K562 (cell line): ENCODE measurements at regions of chr9 and their contacts with region 1.

Region 1: GRCh38 chr9:32571969-32572899 is 725 bp downstream of the NDUFB6 start:
- DNase-seq: peak; percentile 59 to 82 (median 68)
- ATAC-seq: peak; percentile 97
- H3K4me3 ChIP-seq: peak overlapping the region; percentile 78
- H3K27ac ChIP-seq: peak overlapping the region; percentile 69
- H3K4me1 ChIP-seq: no peaks in the 10 kb centered on the region
- H3K27me3 ChIP-seq: no peaks in the 10 kb centered on the region
- CTCF ChIP-seq: peak; percentile 68 to 72 (median 72)
- EP300 ChIP-seq: no peak
- POLR2A ChIP-seq: no peak
- RAD21 ChIP-seq: peak; percentile 50 to 68

Region 2: GRCh38 chr9:32431940-32432555 is 140.2 kb before region 1 on chr9:
- CTCF ChIA-PET with region 1: no interaction called
- POLR2A ChIA-PET with region 1: no interaction called
- in situ Hi-C with region 1: no loop called
- intact Hi-C with region 1: loop called (anchors 5 kb)
- DNase-seq: peak; percentile 24 to 50 (median 44)
- ATAC-seq: peak; percentile 86
- H3K4me3 ChIP-seq: no peak overlapping the region
- H3K27ac ChIP-seq: no peak overlapping the region
- H3K4me1 ChIP-seq: peaks cover 0 to 5% of the 10 kb centered on the region in 2 experiments; a peak in 2 of 5 replicates
- H3K27me3 ChIP-seq: no peaks in the 10 kb centered on the region
- CTCF ChIP-seq: peak; percentile 50 to 61 (median 53)
- EP300 ChIP-seq: no peak
- POLR2A ChIP-seq: no peak
- RAD21 ChIP-seq: peak in 1 of 2 experiments; percentile 34; a peak in 2 of 4 replicates

Region 3: DNA sequence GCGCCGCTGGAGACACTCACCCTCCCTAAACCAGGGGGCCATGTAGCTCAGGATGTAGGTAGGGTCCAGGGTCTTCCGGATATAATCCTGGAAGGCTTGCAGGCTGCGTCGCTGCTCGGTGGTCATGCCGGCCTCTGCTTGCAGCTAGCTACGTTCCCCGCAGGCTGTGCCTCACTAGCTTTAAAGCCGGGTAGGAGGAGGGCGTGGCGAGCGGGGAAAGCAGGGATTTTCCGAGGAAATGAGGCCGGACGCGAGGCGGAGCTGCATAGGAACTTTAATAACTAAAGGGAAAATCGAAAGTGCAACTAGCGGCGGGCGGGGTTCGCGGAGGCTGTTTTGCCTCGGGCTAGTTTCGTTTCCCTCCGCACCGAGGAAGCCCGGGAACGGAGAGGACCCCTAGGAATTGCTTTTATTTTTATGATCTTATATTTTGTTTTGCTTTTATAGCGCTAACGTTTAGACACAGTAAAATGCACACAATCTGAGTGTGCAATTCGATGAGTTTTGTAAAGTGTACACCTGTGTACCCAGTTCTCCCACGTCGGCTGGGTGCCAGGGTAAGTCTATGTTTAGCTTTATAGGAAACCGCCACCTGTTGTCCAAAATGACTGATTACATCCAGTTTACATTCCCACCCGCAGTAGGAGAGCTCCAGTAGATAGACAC is 46.1 kb before region 1 on chr9 and contains the start of gene RIGI:
- CTCF ChIA-PET with region 1: no interaction called
- POLR2A ChIA-PET with region 1: no interaction called
- in situ Hi-C with region 1: no loop called
- intact Hi-C with region 1: loop called (anchors 2 kb)
- DNase-seq: peak; percentile 33 to 69 (median 44)
- ATAC-seq: peak; percentile 94
- H3K4me3 ChIP-seq: peak within 1 kb of the TSS; percentile 54
- H3K27ac ChIP-seq: peak within 1 kb of the TSS; percentile 33; the same call in 2 of the 3 replicates
- H3K4me1 ChIP-seq: peaks cover 0 to 4% of the 10 kb centered on the region in 2 experiments; a peak in 1 of 5 replicates
- H3K27me3 ChIP-seq: no peaks in the 10 kb centered on the region
- CTCF ChIP-seq: peak; percentile 31 to 55 (median 53); a peak in 5 of 6 replicates
- EP300 ChIP-seq: no peak
- POLR2A ChIP-seq: no peak
- RAD21 ChIP-seq: peak; percentile 24 to 52; a peak in 2 of 4 replicates
- polyA plus RNA-seq, gene RIGI: 0.32 to 0.36 TPM

Region 4: GRCh38 chr9:32550562-32551433 is 21.4 kb before region 1 on chr9:
- CTCF ChIA-PET with region 1: no interaction called
- POLR2A ChIA-PET with region 1: interaction called, 6 read pairs
- in situ Hi-C with region 1: no loop called
- intact Hi-C with region 1: loop called (anchors 2 kb)
- DNase-seq: peak; percentile 86 to 93 (median 88)
- ATAC-seq: peak; percentile 78
- H3K4me3 ChIP-seq: peak overlapping the region; percentile 73
- H3K27ac ChIP-seq: peak overlapping the region; percentile 97
- H3K4me1 ChIP-seq: peaks cover 14% of the 10 kb centered on the region in 2 experiments; a peak in 4 of 5 replicates
- H3K27me3 ChIP-seq: no peaks in the 10 kb centered on the region
- CTCF ChIP-seq: 0 out of 6 replicates have a peak, but pooled peaks of 2 of the 3 experiments have one; percentile 2 to 5
- EP300 ChIP-seq: no peak
- POLR2A ChIP-seq: peak; percentile 52; the same call in 1 of the 2 replicates
- RAD21 ChIP-seq: no peak